GM12878 (cell line): ENCODE measurements at regions of chr2 and their contacts with region 1.

Region 1: GRCh38 chr2:233443468-233444183 is 89.3 kb downstream of the DGKD start:
- DNase-seq: peak; percentile 31
- ATAC-seq: peak; percentile 94
- H3K4me3 ChIP-seq: no peak overlapping the region
- H3K27ac ChIP-seq: no peak overlapping the region
- H3K4me1 ChIP-seq: no peaks in the 10 kb centered on the region
- H3K27me3 ChIP-seq: no peaks in the 10 kb centered on the region
- CTCF ChIP-seq: peak; percentile 82 to 93 (median 86); a peak in 5 of 6 replicates
- EP300 ChIP-seq: no peak
- POLR2A ChIP-seq: no peak
- RAD21 ChIP-seq: peak; percentile 93

Region 2: DNA sequence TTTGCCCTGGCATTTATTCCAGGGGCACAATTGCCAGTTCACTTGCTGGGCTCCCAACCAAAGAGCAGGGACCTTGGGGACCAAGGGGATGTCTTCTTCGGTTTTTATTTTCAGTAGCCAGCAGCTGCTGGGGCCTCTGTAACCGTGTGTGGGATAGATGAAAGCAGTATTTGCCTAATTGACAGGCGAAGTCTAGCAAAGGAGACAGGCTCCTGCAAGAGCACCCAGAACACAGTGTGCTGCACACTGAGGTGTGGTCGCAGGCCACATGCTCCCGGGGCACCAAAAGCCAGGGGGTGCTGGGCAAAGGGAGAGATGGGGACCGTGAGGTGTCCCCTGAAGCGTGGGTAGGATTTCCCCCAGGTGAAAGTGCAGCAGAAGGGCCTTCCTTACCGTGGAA is 130.8 kb before region 1 on chr2:
- CTCF ChIA-PET with region 1: interaction called, 6 read pairs
- POLR2A ChIA-PET with region 1: no interaction called
- RAD21 ChIA-PET with region 1: interaction called, 3 read pairs
- SMC1A ChIA-PET with region 1: interaction called, 6 read pairs
- in situ Hi-C with region 1: no loop called
- intact Hi-C with region 1: loop called (anchors 10 kb)
- DNase-seq: no peak
- ATAC-seq: peak; percentile 62
- H3K4me3 ChIP-seq: no peak overlapping the region
- H3K27ac ChIP-seq: no peak overlapping the region
- H3K4me1 ChIP-seq: peaks cover 15% of the 10 kb centered on the region
- H3K27me3 ChIP-seq: no peaks in the 10 kb centered on the region
- CTCF ChIP-seq: no peak
- EP300 ChIP-seq: no peak
- POLR2A ChIP-seq: no peak
- RAD21 ChIP-seq: no peak

Region 3: GRCh38 chr2:233353769-233354499 is 89.7 kb before region 1 on chr2 and contains the start of gene DGKD:
- CTCF ChIA-PET with region 1: interaction called, 21 read pairs
- POLR2A ChIA-PET with region 1: no interaction called
- RAD21 ChIA-PET with region 1: interaction called, 7 read pairs
- SMC1A ChIA-PET with region 1: interaction called, 7 read pairs
- in situ Hi-C with region 1: no loop called
- intact Hi-C with region 1: loop called (anchors 1 kb)
- DNase-seq: no peak
- ATAC-seq: peak; percentile 67
- H3K4me3 ChIP-seq: peak within 1 kb of the TSS; percentile 85
- H3K27ac ChIP-seq: peak within 1 kb of the TSS; percentile 94
- H3K4me1 ChIP-seq: peaks cover 32% of the 10 kb centered on the region
- H3K27me3 ChIP-seq: no peaks in the 10 kb centered on the region
- CTCF ChIP-seq: peak in 2 of 3 experiments; percentile 43 to 50; a peak in 3 of 6 replicates
- EP300 ChIP-seq: no peak
- POLR2A ChIP-seq: peak; percentile 93
- RAD21 ChIP-seq: 0 out of 2 replicates have a peak, but pooled peaks have one; percentile 7
- polyA plus RNA-seq, gene DGKD: 2.7 to 3.1 TPM

Region 4: GRCh38 chr2:233379441-233379840 is 64.2 kb before region 1 on chr2:
- CTCF ChIA-PET with region 1: interaction called, 10 read pairs
- POLR2A ChIA-PET with region 1: no interaction called
- RAD21 ChIA-PET with region 1: interaction called, 6 read pairs
- SMC1A ChIA-PET with region 1: interaction called, 3 read pairs
- in situ Hi-C with region 1: no loop called
- intact Hi-C with region 1: no loop called
- DNase-seq: no peak
- ATAC-seq: no peak
- H3K4me3 ChIP-seq: no peak overlapping the region
- H3K27ac ChIP-seq: no peak overlapping the region
- H3K4me1 ChIP-seq: peaks cover 52% of the 10 kb centered on the region
- H3K27me3 ChIP-seq: no peaks in the 10 kb centered on the region
- CTCF ChIP-seq: no peak
- EP300 ChIP-seq: no peak
- POLR2A ChIP-seq: no peak
- RAD21 ChIP-seq: no peak

Region 5: DNA sequence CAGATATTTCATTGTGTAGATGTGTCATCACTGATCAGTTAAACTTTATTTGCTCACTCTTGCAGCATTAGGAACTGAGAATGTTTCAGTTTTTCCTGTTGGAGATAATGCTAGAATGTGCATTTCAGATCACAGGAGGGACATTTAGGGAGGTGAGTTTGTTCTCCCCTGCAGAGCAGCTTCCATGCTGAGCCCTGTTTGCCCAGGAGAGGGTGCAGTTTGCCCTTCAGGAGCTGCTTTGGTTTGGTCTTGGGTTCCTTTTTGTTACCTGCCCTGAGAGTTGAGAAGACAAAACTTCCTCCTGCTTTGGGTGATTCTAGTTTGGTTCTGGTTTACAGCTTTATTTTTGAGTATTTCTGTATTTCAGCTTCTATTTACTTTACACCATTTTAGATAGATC is 39.4 kb before region 1 on chr2:
- CTCF ChIA-PET with region 1: interaction called, 215 read pairs
- POLR2A ChIA-PET with region 1: no interaction called
- RAD21 ChIA-PET with region 1: interaction called, 73 read pairs
- SMC1A ChIA-PET with region 1: interaction called, 80 read pairs
- in situ Hi-C with region 1: loop called (anchors 5 kb)
- intact Hi-C with region 1: loop called (anchors 1 kb)
- DNase-seq: no peak
- ATAC-seq: peak; percentile 97
- H3K4me3 ChIP-seq: no peak overlapping the region
- H3K27ac ChIP-seq: no peak overlapping the region
- H3K4me1 ChIP-seq: peaks cover 5% of the 10 kb centered on the region
- H3K27me3 ChIP-seq: no peaks in the 10 kb centered on the region
- CTCF ChIP-seq: peak; percentile 85 to 88 (median 86)
- EP300 ChIP-seq: no peak
- POLR2A ChIP-seq: no peak
- RAD21 ChIP-seq: peak; percentile 89

Region 6: DNA sequence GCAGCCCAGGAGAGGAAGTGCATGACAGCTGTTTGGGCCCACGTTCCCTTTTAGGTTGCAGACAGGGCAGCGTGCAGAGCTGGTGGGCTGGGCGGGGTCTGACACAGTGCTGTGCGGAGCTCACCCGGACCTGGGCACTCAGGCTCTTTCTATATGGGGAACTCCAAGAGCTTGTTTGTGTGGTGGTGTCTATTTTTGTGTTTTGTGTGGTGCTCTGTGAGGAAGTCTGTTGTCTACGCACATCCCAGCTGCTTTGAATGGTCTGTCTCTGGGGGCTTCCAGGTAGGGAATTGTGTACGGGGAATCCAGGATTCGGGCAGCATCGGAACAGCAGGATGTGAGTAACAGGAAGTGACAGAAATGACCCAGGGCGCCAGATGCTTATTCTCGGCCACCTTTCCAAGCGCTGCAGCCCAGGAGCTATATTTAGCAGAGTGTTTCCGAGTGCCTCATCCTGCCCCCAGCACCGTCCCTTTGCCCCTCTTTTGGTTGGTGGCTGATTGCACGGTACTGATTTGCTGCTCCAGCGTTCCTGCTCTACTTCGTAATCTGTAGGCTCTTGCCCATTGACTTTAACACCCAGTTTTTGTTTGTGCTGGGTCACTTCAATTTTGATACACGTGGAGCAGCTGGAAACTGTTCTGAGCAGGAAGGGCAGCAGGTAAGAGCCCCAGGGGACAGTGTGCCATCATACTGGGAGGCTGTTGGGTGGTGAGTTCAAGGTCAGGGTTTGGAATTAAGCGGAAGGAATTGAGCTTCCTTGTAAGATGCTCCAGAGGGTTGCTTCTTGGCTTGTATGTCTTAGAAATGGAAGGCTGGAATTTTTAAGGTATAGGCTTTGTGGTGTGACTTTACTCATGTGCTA is 24.6 kb before region 1 on chr2:
- CTCF ChIA-PET with region 1: interaction called, 84 read pairs
- POLR2A ChIA-PET with region 1: no interaction called
- RAD21 ChIA-PET with region 1: interaction called, 28 read pairs
- SMC1A ChIA-PET with region 1: interaction called, 18 read pairs
- in situ Hi-C with region 1: no loop called
- intact Hi-C with region 1: loop called (anchors 1 kb)
- DNase-seq: peak; percentile 62
- ATAC-seq: peak; percentile 81
- H3K4me3 ChIP-seq: peak overlapping the region; percentile 74
- H3K27ac ChIP-seq: peak overlapping the region; percentile 95
- H3K4me1 ChIP-seq: peaks cover 68% of the 10 kb centered on the region
- H3K27me3 ChIP-seq: no peaks in the 10 kb centered on the region
- CTCF ChIP-seq: no peak
- EP300 ChIP-seq: peak in 1 of 2 experiments; percentile 66; a peak in 1 of 4 replicates
- POLR2A ChIP-seq: 0 out of 2 replicates have a peak, but pooled peaks have one; percentile 15
- RAD21 ChIP-seq: no peak

Region 7: DNA sequence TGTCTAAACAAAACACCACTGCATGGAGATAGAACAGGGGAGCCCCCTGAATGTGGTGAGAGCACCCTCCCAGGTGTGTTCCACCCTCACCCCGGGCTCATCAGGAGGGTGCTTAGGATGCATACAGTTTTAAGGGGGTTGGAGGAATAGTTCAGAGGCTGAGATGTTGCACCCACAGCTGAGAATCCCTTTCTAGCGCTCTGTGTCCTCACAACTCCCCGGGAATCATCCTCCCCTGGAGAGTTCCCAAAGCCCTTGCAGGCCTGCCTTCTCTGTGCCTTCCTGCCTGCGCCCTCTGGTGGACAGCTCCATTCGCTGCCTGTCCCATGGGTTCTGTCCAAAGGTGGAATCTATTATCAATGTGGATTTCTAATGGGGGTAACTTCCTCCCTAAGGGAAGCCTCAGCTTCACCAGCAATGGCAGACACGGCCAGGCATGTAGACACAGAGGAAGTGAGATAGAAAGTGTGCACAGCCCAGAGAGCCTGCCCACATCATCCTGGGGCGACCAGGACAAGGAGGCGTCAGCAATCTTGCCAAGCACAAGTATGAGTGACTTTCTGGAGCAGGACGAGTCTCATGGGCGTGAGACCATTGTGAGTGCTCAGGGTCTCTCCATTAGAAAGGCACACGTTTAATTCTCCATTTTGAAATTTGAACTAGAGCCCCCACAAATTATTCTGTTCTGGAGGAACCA is 267.8 kb after region 1 on chr2:
- CTCF ChIA-PET with region 1: interaction called, 3 read pairs
- POLR2A ChIA-PET with region 1: no interaction called
- RAD21 ChIA-PET with region 1: interaction called, 4 read pairs
- SMC1A ChIA-PET with region 1: no interaction called
- in situ Hi-C with region 1: no loop called
- intact Hi-C with region 1: loop called (anchors 2 kb)
- DNase-seq: peak; percentile 1
- ATAC-seq: peak; percentile 96
- H3K4me3 ChIP-seq: no peak overlapping the region
- H3K27ac ChIP-seq: no peak overlapping the region
- H3K4me1 ChIP-seq: no peaks in the 10 kb centered on the region
- H3K27me3 ChIP-seq: peaks cover 0 to 4% of the 10 kb centered on the region in 2 experiments; a peak in 1 of 4 replicates
- CTCF ChIP-seq: peak; percentile 82 to 87 (median 85)
- EP300 ChIP-seq: no peak
- POLR2A ChIP-seq: no peak
- RAD21 ChIP-seq: peak; percentile 83